Right lobe of liver (tissue), 6 donors: ENCODE measurements at regions of chr20 and their contacts with region 1.

Region 1: GRCh38 chr20:29878281-29878741 is 1379.2 kb upstream of the DEFB115 start:
- DNase-seq: peak; percentile 22 to 57 (median 53)
- ATAC-seq: peak; percentile 33 to 60 (median 50)
- H3K4me3 ChIP-seq: no peak overlapping the region
- H3K27ac ChIP-seq: no peak overlapping the region
- H3K4me1 ChIP-seq: no peaks in the 10 kb centered on the region
- H3K27me3 ChIP-seq: no peaks in the 10 kb centered on the region
- CTCF ChIP-seq: no peak
- POLR2A ChIP-seq: no peak

Region 2: DNA sequence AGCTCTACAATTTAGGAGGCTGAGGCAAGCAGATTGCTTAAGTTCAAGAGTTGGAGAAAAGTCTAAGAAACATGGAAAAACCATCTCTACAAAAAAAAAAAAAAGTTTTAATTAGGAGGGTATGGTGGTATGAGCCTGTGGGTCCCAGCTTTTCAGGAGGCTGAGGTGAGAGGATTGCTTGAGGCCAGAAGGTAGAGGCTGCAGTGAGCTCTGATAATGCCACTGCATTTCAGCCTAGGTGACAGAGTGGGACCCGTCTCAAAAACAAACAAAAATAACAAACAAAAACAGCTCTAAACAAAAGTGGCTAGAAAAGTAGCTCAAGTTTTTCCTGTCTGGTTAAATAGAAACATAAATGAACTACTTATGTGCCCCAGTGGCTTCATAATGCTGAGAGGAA is 754.5 kb before region 1 on chr20:
- intact Hi-C with region 1: loop called in 1 of 2 experiments (anchors 5 kb)
- DNase-seq: no peak
- ATAC-seq: peak in 1 of 4 donors; percentile 12
- H3K4me3 ChIP-seq: no peak overlapping the region
- H3K27ac ChIP-seq: no peak overlapping the region
- H3K4me1 ChIP-seq: no peaks in the 10 kb centered on the region
- H3K27me3 ChIP-seq: no peaks in the 10 kb centered on the region
- CTCF ChIP-seq: no peak
- POLR2A ChIP-seq: no peak